ENCODE measurements at regions of chr16 and their contacts with region 1.

Region 1: DNA sequence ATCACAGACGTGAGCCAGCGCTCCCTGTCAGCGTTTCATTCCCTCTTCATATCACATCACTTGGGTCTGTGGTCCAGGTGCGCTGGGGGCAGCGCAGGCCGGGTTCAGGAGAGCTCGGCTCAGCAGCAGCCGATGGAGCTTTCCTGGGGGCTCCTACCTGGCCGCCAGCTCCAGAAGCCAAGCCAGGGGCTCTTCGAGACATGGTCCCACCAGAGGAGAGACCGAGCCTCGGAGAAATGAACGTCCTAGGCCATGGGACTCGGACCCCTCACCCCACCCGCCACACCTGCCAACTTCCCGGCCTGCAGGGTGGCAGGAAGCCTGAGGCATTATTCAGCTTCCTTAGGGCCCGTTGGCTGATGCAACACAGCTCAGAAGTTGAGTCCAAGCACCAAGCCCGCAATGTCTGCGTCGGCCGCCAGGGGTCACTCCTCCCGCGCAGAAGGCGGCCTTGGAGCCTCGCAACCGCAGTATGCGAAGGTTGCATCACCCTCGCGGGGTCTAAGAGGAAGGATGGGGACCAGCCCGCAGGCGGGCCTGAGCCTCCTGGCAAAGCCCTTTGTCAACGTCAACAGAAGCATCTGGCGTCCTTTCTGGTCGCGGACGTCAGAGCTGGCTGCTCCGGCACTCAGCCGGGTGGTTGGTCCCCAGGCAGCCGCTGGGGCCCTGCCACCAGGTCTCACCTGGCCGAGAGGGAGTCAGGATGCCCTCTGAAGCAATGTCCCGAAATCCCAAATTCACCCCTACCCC is 13.2 kb upstream of the KLHDC4 start:
- DNase-seq: peak; percentile 97
- ATAC-seq: peak; percentile 77
- H3K4me3 Mint-ChIP-seq: no peak overlapping the region
- H3K27ac Mint-ChIP-seq: peak overlapping the region; percentile 95
- H3K4me1 Mint-ChIP-seq: peaks cover 14% of the 10 kb centered on the region
- H3K27me3 Mint-ChIP-seq: peaks cover 3% of the 10 kb centered on the region
- CTCF ChIP-seq: peak; percentile 97

Region 2: DNA sequence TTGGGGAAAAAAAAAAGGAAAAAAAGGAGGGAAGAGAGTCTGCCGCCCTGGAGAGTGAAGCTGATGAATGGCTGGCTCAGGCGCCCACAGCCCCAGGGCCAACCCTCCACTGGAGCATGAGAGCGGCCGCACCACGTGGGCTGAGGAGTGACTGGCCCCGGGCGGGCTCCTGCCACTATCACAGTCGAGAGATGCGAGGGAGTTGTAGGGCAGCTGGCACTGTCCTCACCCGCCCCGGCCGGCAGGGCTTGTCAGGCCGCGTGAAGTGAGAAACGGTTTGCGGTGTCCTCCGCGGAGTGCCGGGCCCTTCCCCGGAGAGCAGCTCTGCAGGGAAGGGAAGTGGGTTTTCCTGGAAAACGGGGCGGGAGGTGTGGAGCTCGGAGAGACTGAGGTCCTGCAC is 130.8 kb before region 1 on chr16:
- CTCF ChIA-PET with region 1: no interaction called
- POLR2A ChIA-PET with region 1: no interaction called
- DNase-seq: no peak
- ATAC-seq: no peak; the same call in 1 of the 2 replicates
- H3K4me3 Mint-ChIP-seq: no peak overlapping the region
- H3K27ac Mint-ChIP-seq: peak overlapping the region; percentile 95
- H3K4me1 Mint-ChIP-seq: 0 out of 2 replicates have a peak, but pooled peaks cover 9% of the 10 kb centered on the region
- H3K27me3 Mint-ChIP-seq: no peaks in the 10 kb centered on the region
- CTCF ChIP-seq: no peak

Region 3: GRCh38 chr16:87747626-87748414 is 31.2 kb before region 1 on chr16:
- CTCF ChIA-PET with region 1: no interaction called
- POLR2A ChIA-PET with region 1: no interaction called
- DNase-seq: peak; percentile 33
- ATAC-seq: peak; percentile 73
- H3K4me3 Mint-ChIP-seq: no peak overlapping the region
- H3K27ac Mint-ChIP-seq: no peak overlapping the region
- H3K4me1 Mint-ChIP-seq: no peaks in the 10 kb centered on the region
- H3K27me3 Mint-ChIP-seq: no peaks in the 10 kb centered on the region; the same call in 1 of the 2 replicates
- CTCF ChIP-seq: no peak

Region 4: DNA sequence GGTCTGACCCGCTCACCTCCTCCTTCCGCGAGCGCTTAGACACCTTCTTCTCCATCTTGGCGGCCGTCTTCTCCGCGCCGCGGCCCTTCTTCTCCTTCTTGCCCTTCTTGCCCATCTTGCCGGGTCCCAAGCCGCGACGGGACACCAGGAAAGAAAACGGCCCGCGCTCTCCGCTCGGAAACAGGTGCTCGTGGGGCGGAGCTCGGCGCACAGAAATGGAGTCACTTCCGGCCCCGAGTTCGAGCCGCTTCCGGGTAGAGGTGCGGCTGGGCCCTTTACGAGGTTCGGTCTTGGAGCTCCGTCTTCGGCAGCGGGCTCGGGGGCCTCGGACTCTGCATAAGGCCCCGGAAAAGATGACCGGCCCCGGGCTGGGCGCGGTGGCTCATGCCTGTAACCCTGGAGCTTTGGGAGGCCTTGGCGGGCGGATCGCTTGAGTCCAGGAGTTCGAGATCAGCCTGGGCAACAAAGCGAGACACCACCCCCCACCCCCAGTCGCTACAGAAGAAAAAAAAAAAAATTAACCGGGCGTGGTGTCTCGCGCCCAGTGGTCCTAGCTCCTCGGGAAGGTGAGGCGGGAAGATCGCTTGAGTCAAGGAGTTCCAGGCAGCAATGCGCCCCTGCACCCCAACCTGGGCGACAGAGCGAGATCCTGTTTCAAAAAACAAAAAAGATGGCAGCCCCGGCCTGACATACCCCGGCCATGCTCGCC is 13.1 kb before region 1 on chr16 and contains the start of gene KLHDC4:
- CTCF ChIA-PET with region 1: interaction called, 42 read pairs
- POLR2A ChIA-PET with region 1: interaction called, 4 read pairs
- DNase-seq: peak; percentile 88
- ATAC-seq: peak; percentile 73
- H3K4me3 Mint-ChIP-seq: peak within 1 kb of the TSS; percentile 100
- H3K27ac Mint-ChIP-seq: peak within 1 kb of the TSS; percentile 95
- H3K4me1 Mint-ChIP-seq: peaks cover 6% of the 10 kb centered on the region; the same call in 1 of the 2 replicates
- H3K27me3 Mint-ChIP-seq: no peaks in the 10 kb centered on the region
- CTCF ChIP-seq: no peak
- total RNA-seq, gene KLHDC4: 60.0 to 63.6 TPM (median 60.5 TPM) in 3 replicates

Region 5: GRCh38 chr16:87822108-87822970 is 43.3 kb after region 1 on chr16:
- CTCF ChIA-PET with region 1: interaction called, 52 read pairs
- POLR2A ChIA-PET with region 1: interaction called, 11 read pairs
- DNase-seq: no peak
- ATAC-seq: peak; percentile 13; the same call in 1 of the 2 replicates
- H3K4me3 Mint-ChIP-seq: no peak overlapping the region
- H3K27ac Mint-ChIP-seq: 0 out of 2 replicates have a peak overlapping the region, but pooled peaks have one; percentile 65
- H3K4me1 Mint-ChIP-seq: peaks cover 64% of the 10 kb centered on the region
- H3K27me3 Mint-ChIP-seq: no peaks in the 10 kb centered on the region
- CTCF ChIP-seq: no peak

Region 6: DNA sequence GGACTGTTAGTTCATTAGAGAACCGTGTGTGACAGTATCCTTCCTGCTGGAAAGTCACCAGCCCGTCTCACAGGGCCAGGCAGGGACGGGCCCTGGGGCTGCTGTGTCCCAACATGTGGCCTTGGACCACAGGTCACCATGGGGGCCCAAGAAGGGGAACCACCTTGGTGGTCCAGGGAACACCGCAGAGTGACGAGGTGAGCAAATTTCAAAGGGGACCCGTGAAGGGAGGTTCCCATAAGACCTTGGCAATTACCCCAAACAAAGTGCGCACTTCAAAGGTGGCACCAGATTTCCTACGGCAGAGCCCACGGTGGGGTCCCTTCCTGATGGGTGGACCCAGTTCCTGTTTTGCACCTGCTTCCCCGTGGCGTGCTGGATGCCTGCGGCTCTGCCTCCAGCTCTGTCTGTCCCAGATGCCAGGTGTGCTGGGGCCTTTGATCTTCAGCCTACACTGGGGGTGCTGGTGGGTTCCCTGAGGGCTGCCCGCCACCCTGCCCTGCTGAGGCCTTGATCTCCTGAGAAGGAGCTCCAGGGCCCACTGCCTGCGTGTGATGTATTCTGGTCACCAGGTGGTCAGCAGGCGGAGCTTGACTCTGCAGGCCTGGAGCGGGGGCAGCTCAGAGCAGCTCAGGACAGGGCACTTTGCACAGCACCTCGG is 63.3 kb after region 1 on chr16:
- CTCF ChIA-PET with region 1: interaction called, 122 read pairs
- POLR2A ChIA-PET with region 1: interaction called, 15 read pairs
- DNase-seq: no peak
- ATAC-seq: no peak
- H3K4me3 Mint-ChIP-seq: no peak overlapping the region
- H3K27ac Mint-ChIP-seq: peak overlapping the region; percentile 80
- H3K4me1 Mint-ChIP-seq: peaks cover 12% of the 10 kb centered on the region
- H3K27me3 Mint-ChIP-seq: no peaks in the 10 kb centered on the region
- CTCF ChIP-seq: no peak

Region 7: GRCh38 chr16:87853411-87854052 is 74.5 kb after region 1 on chr16:
- CTCF ChIA-PET with region 1: interaction called, 122 read pairs
- POLR2A ChIA-PET with region 1: interaction called, 15 read pairs
- DNase-seq: peak; percentile 94
- ATAC-seq: peak; percentile 66
- H3K4me3 Mint-ChIP-seq: peak overlapping the region; percentile 14; the same call in 1 of the 2 replicates
- H3K27ac Mint-ChIP-seq: peak overlapping the region; percentile 93
- H3K4me1 Mint-ChIP-seq: peaks cover 38% of the 10 kb centered on the region
- H3K27me3 Mint-ChIP-seq: no peaks in the 10 kb centered on the region
- CTCF ChIP-seq: no peak

Region 8: GRCh38 chr16:87914812-87915211 is 135.8 kb after region 1 on chr16:
- CTCF ChIA-PET with region 1: interaction called, 21 read pairs
- POLR2A ChIA-PET with region 1: no interaction called
- DNase-seq: no peak
- ATAC-seq: no peak
- H3K4me3 Mint-ChIP-seq: no peak overlapping the region
- H3K27ac Mint-ChIP-seq: no peak overlapping the region
- H3K4me1 Mint-ChIP-seq: no peaks in the 10 kb centered on the region; the same call in 1 of the 2 replicates
- H3K27me3 Mint-ChIP-seq: no peaks in the 10 kb centered on the region
- CTCF ChIP-seq: no peak

Measured in WTC11 (cell line).